Right cardiac atrium (tissue), 5 donors: ENCODE measurements at regions of chr16 and their contacts with region 1.

Region 1: GRCh38 chr16:28108590-28109247 is 45.2 kb upstream of the GSG1L start:
- DNase-seq: no peak
- ATAC-seq: no peak
- H3K4me3 ChIP-seq: no peak overlapping the region
- H3K27ac ChIP-seq: no peak overlapping the region
- H3K4me1 ChIP-seq: no peaks in the 10 kb centered on the region
- H3K27me3 ChIP-seq: no peaks in the 10 kb centered on the region

Region 2: GRCh38 chr16:27999687-28000086 is 109.0 kb before region 1 on chr16:
- intact Hi-C with region 1: no loop called
- DNase-seq: no peak
- ATAC-seq: no peak
- H3K4me3 ChIP-seq: no peak overlapping the region
- H3K27ac ChIP-seq: no peak overlapping the region
- H3K4me1 ChIP-seq: no peaks in the 10 kb centered on the region
- H3K27me3 ChIP-seq: no peaks in the 10 kb centered on the region

Region 3: DNA sequence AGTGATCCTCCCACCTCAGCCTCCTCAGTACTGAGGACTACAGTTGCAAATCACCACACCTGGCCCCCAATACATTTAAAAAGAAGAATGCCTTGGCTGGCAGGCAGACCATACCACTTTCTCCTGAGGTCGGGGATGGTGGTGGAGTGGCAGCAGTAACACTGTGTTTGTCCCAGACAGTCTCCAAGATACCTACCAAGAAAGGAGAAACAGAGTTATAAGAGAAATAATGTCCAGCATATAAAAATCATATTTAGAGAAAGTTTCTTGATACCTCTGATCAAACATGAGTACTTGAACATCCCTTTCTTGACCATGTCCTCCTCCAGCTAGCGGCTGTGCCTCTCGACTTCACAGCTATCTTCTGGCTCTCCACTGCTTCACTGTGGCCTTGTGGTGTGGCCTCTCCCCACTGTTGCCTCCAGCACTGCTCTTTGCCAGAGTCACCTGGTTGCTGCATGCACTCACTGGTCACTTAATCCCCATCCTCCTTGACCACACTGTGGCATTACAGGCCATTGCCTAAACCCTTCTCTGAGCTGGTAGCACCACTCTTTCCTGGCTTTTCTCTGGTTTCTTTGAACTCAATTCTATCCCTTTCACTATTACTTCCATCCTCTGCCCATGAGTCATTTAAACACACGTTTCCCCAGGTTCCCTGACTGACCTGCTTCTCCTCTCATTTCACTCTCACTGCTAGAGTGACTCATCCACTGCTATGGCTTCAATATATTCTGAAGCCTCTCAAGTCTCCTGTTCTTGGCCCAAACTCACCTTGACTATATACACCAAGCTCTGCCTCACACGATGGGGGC is 57.9 kb after region 1 on chr16:
- intact Hi-C with region 1: loop called in 1 of 4 experiments (anchors 10 kb)
- DNase-seq: no peak
- ATAC-seq: no peak
- H3K4me3 ChIP-seq: no peak overlapping the region
- H3K27ac ChIP-seq: no peak overlapping the region
- H3K4me1 ChIP-seq: no peaks in the 10 kb centered on the region
- H3K27me3 ChIP-seq: no peaks in the 10 kb centered on the region